ENCODE measurements at regions of chr1 and their contacts with region 1.

Region 1: DNA sequence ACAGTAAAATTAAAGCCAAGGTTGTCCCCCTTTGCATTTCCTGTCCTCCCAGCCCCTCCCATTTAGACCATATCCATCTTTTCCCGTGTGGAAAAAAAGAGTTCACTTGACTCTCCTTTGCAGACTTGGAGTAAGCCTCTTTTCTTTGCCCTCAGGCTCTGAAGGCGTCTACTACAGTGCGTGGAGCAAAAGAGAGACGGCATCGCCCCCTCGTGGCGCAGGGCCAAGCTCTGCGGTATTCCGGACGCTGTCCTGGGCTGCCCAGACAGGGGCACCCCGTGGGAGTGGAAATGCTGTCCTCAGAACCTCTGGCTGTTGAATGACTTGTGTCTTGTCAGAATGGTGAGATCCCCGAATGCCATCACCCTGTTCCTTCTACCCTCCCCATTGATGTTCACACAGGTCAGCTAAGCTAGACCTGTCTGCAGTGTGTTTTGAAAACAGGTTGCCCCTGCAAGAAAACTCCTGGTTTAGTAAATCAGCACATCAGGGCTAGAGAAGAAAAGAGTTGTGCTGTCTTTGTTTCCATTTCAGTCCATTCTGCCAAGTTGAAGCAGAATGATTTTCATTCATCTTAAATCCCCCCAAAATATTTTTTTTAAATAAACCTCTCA is 12.3 kb upstream of the GJA8 start:
- DNase-seq: peak; percentile 46 to 68
- ATAC-seq: peak in 1 of 4 donors; percentile 39
- H3K4me3 ChIP-seq: no peak overlapping the region
- H3K27ac ChIP-seq: no peak overlapping the region
- H3K4me1 ChIP-seq: no peaks in the 10 kb centered on the region
- H3K27me3 ChIP-seq: no peaks in the 10 kb centered on the region
- CTCF ChIP-seq: peak; percentile 38

Region 2: DNA sequence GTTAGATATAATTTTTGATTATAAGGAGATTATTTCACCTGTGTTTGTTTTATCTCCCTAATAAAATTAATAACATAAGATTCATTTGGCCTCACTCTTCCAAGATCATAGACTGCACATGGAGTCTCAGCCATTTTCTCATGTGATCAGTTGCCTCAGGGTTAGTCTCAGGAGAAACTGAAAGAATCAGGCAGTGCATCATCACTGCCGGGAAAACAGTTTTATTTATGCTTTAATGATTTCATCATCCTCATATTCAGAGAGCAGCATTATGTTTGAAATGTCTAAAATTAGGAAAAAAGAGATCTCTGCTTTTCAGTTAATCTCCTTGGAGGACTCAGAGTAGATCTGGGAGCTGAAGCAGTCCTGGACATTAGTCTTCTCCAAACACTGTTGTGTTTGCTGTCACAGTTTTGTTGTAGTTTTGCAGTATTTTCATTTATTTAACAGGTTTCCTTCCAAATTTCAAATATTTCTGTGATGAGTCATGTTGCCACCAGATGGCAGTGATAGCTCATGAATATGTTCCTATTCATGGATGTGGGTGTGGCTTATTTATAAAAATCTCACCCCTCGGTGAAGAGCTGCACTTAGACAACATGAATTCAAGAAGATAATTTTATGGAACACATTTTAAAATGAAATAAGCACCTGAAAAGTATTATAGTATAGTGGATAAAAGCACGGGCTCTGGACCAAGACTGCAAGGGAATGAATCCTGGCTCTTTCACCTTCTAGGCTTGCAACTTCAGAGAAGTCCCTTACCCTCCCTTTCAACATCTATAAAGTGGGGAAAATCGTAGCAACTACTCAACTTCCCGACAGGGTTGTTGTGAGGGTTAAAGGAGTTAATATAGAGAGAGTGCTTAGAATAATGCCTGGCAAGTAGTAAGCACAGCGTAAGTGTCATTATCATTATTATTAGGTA is 616.6 kb before region 1 on chr1:
- intact Hi-C with region 1: loop called in 1 of 2 experiments (anchors 10 kb)
- DNase-seq: no peak
- ATAC-seq: peak; percentile 62 to 88 (median 76)
- H3K4me3 ChIP-seq: no peak overlapping the region
- H3K27ac ChIP-seq: peak overlapping the region; percentile 34
- H3K4me1 ChIP-seq: peaks cover 4% of the 10 kb centered on the region
- H3K27me3 ChIP-seq: no peaks in the 10 kb centered on the region
- CTCF ChIP-seq: peak; percentile 47

Region 3: GRCh38 chr1:147494998-147495580 is 395.2 kb before region 1 on chr1:
- intact Hi-C with region 1: loop called (anchors 1 to 5 kb)
- DNase-seq: peak; percentile 61 to 78
- ATAC-seq: peak; percentile 89 to 97 (median 96)
- H3K4me3 ChIP-seq: no peak overlapping the region
- H3K27ac ChIP-seq: no peak overlapping the region
- H3K4me1 ChIP-seq: peaks cover 6% of the 10 kb centered on the region
- H3K27me3 ChIP-seq: no peaks in the 10 kb centered on the region
- CTCF ChIP-seq: peak; percentile 95

Region 4: GRCh38 chr1:147723691-147724323 is 166.5 kb before region 1 on chr1:
- intact Hi-C with region 1: loop called (anchors 1 to 5 kb)
- DNase-seq: no peak
- ATAC-seq: peak in 3 of 4 donors; percentile 59 to 76 (median 64)
- H3K4me3 ChIP-seq: no peak overlapping the region
- H3K27ac ChIP-seq: no peak overlapping the region
- H3K4me1 ChIP-seq: no peaks in the 10 kb centered on the region
- H3K27me3 ChIP-seq: peaks cover 0 to 2% (median 0%) of the 10 kb centered on the region in 3 donors
- CTCF ChIP-seq: peak; percentile 60

Region 5: DNA sequence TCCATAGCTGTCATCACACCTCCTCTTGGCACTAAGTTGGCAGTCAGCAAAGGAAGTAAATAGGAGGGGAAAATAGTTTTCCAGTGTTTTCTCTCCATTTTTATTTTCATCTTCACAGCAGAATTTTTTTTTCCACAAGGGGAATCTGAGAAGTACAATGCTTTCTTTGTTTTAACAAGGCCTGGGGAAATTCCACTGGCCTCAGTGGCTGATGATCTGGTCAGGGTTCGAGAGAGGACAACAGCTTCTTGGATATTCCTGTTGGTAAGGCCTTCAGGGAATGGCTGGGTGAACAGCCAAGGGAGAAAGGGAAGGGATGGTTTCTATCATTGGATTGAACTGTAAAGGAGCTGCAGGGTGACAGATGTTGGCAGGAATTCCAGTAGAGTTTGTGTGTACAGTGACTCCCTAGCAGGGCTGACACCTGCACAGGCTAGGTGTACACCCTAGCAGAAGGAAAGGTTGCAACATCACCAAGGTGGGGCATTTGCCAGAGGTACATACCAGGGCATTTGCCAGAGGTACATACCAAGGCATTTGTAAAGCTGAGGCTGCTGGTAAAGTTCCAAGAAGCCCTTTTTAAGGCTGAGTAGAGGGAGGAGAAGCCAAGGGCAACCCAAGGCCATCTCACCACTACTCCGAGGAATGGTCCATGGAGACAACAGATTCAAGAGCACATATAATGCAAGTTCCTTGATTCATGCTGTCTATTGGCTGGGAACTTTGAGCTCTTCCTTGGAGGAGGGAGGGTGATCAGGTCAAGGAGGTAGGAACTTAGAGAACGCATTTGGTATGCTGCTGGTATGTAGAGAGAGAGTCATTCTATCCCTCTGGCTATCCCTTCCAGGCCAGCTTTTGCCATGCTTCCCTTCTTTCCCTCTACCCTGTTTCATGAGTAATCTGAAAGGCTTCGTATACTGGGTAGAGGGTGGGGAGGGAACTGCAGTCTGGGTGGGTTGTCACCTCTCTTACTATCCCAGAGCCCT is 133.0 kb before region 1 on chr1:
- intact Hi-C with region 1: no loop called
- DNase-seq: no peak
- ATAC-seq: no peak
- H3K4me3 ChIP-seq: no peak overlapping the region
- H3K27ac ChIP-seq: no peak overlapping the region
- H3K4me1 ChIP-seq: peaks cover 15% of the 10 kb centered on the region
- H3K27me3 ChIP-seq: no peaks in the 10 kb centered on the region
- CTCF ChIP-seq: no peak

Measured in psoas muscle (tissue), 8 donors.